Natural killer cell (primary cell): ENCODE measurements at regions of chr1 and their contacts with region 1.

Region 1: GRCh38 chr1:19762175-19762779 is 37.4 kb downstream of the TMCO4 start:
- DNase-seq: peak in 1 of 2 donors; percentile 54
- ATAC-seq: peak in 1 of 3 donors; percentile 48
- H3K4me3 ChIP-seq: no peak overlapping the region
- H3K4me3 Mint-ChIP-seq: no peak overlapping the region
- H3K27ac ChIP-seq: no peak overlapping the region
- H3K27ac Mint-ChIP-seq: no peak overlapping the region
- H3K4me1 ChIP-seq: no peaks in the 10 kb centered on the region
- H3K4me1 Mint-ChIP-seq: peaks cover 0 to 6% of the 10 kb centered on the region in 2 donors
- H3K27me3 ChIP-seq: no peaks in the 10 kb centered on the region
- H3K27me3 Mint-ChIP-seq: no peaks in the 10 kb centered on the region
- CTCF ChIP-seq: peak; percentile 31

Region 2: GRCh38 chr1:19704247-19705113 is 57.8 kb before region 1 on chr1:
- intact Hi-C with region 1: no loop called
- DNase-seq: peak; percentile 54 to 79
- ATAC-seq: peak; percentile 70 to 91 (median 85)
- H3K4me3 ChIP-seq: no peak overlapping the region
- H3K4me3 Mint-ChIP-seq: no peak overlapping the region
- H3K27ac ChIP-seq: no peak overlapping the region
- H3K27ac Mint-ChIP-seq: no peak overlapping the region
- H3K4me1 ChIP-seq: peaks cover 8% of the 10 kb centered on the region
- H3K4me1 Mint-ChIP-seq: peaks cover 0 to 5% of the 10 kb centered on the region in 2 donors
- H3K27me3 ChIP-seq: no peaks in the 10 kb centered on the region
- H3K27me3 Mint-ChIP-seq: no peaks in the 10 kb centered on the region
- CTCF ChIP-seq: peak; percentile 85

Region 3: GRCh38 chr1:19799877-19800804 is 37.9 kb after region 1 on chr1 and contains the start of gene TMCO4:
- intact Hi-C with region 1: no loop called
- DNase-seq: peak; percentile 21 to 69
- ATAC-seq: peak; percentile 49 to 66 (median 58)
- H3K4me3 ChIP-seq: peak within 1 kb of the TSS; percentile 80
- H3K4me3 Mint-ChIP-seq: peak within 1 kb of the TSS; percentile 96
- H3K27ac ChIP-seq: peak within 1 kb of the TSS; percentile 77
- H3K27ac Mint-ChIP-seq: peak within 1 kb of the TSS; percentile 83 to 89
- H3K4me1 ChIP-seq: peaks cover 18% of the 10 kb centered on the region
- H3K4me1 Mint-ChIP-seq: peaks cover 0 to 31% of the 10 kb centered on the region in 2 donors
- H3K27me3 ChIP-seq: no peaks in the 10 kb centered on the region
- H3K27me3 Mint-ChIP-seq: peaks cover 0 to 2% of the 10 kb centered on the region in 2 donors
- CTCF ChIP-seq: no peak
- total RNA-seq, gene TMCO4: 14.2 to 21.5 (median 18.3) TPM

Region 4: GRCh38 chr1:19815801-19816736 is 53.8 kb after region 1 on chr1:
- intact Hi-C with region 1: no loop called
- DNase-seq: no peak
- ATAC-seq: no peak
- H3K4me3 ChIP-seq: no peak overlapping the region
- H3K4me3 Mint-ChIP-seq: no peak overlapping the region
- H3K27ac ChIP-seq: no peak overlapping the region
- H3K27ac Mint-ChIP-seq: no peak overlapping the region
- H3K4me1 ChIP-seq: no peaks in the 10 kb centered on the region
- H3K4me1 Mint-ChIP-seq: no peaks in the 10 kb centered on the region
- H3K27me3 ChIP-seq: no peaks in the 10 kb centered on the region
- H3K27me3 Mint-ChIP-seq: peaks cover 3 to 9% of the 10 kb centered on the region in 2 donors
- CTCF ChIP-seq: no peak

Region 5: DNA sequence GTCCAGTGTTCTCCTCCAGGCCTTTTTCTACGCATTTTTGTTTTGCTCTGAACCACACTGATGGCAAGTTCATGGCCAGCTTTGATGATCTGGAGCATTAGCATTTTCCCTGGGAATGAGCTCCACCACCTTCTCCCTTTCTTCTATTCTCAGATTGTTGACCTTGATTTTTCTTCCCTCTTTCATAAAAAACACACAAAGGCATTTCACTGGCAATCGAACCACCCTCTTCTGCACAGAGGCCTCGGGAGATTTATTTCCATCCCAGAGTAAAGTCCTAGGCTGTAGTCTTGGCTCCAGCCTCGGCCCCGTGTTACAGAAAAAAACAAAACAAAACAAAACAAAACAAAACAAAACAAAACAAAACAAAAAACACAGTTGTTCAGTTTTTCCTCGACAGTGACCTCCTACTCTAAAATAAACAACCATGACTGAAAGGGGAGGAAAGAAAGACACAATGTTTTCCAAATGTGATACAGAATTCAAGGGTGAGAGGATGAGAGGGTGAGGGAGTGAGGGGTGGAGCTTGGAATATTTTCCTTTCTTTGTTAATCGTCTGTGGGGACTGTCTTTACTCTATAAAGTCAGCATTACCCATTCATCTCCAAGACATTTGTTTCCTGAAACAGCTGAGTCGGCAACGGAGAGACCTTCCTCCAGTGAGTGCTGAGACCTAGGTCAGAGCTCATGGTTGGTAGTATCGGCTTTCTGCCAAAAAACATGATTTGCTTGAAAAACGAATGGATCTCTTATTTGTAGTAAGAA is 82.6 kb after region 1 on chr1:
- intact Hi-C with region 1: no loop called
- DNase-seq: no peak
- ATAC-seq: no peak
- H3K4me3 ChIP-seq: no peak overlapping the region
- H3K4me3 Mint-ChIP-seq: no peak overlapping the region
- H3K27ac ChIP-seq: no peak overlapping the region
- H3K27ac Mint-ChIP-seq: no peak overlapping the region
- H3K4me1 ChIP-seq: no peaks in the 10 kb centered on the region
- H3K4me1 Mint-ChIP-seq: no peaks in the 10 kb centered on the region
- H3K27me3 ChIP-seq: no peaks in the 10 kb centered on the region
- H3K27me3 Mint-ChIP-seq: peaks cover 22 to 35% of the 10 kb centered on the region in 2 donors
- CTCF ChIP-seq: no peak

Region 6: GRCh38 chr1:21752186-21752585 is 1989.9 kb after region 1 on chr1:
- intact Hi-C with region 1: loop called (anchors 10 kb)
- DNase-seq: no peak
- ATAC-seq: no peak
- H3K4me3 ChIP-seq: no peak overlapping the region
- H3K4me3 Mint-ChIP-seq: no peak overlapping the region
- H3K27ac ChIP-seq: no peak overlapping the region
- H3K27ac Mint-ChIP-seq: no peak overlapping the region
- H3K4me1 ChIP-seq: no peaks in the 10 kb centered on the region
- H3K4me1 Mint-ChIP-seq: peaks cover 0 to 10% of the 10 kb centered on the region in 2 donors
- H3K27me3 ChIP-seq: no peaks in the 10 kb centered on the region
- H3K27me3 Mint-ChIP-seq: no peaks in the 10 kb centered on the region
- CTCF ChIP-seq: no peak